ENCODE measurements at regions of chr6 and their contacts with region 1.

Region 1: GRCh38 chr6:52180787-52181558 is 5.2 kb upstream of the IL17A start:
- DNase-seq: no peak
- H3K4me3 Mint-ChIP-seq: no peak overlapping the region
- H3K27ac Mint-ChIP-seq: no peak overlapping the region
- H3K4me1 Mint-ChIP-seq: peaks cover 8% of the 10 kb centered on the region
- H3K27me3 Mint-ChIP-seq: peaks cover 21% of the 10 kb centered on the region

Region 2: DNA sequence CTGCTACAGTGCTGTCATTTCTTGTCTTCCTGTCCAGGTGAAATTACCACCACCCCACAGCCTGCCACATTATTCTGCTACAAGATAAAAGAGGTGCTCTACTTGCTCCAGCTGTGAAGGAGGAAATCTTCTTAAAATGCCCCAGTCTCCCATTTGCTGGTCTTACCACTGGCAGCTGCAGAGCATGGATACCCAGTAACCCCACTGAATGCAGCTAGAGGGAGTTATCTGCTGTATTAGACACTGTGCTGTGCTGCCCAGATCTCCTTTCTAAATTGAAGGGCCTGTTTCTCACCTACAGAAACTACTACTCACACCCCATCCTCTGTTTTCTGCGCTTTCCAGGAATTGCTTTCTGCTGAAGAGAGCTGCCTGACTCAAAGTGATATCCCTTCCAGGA is 611.4 kb before region 1 on chr6:
- CTCF ChIA-PET with region 1: no interaction called
- intact Hi-C with region 1: no loop called
- DNase-seq: no peak
- H3K4me3 Mint-ChIP-seq: no peak overlapping the region
- H3K27ac Mint-ChIP-seq: no peak overlapping the region
- H3K4me1 Mint-ChIP-seq: no peaks in the 10 kb centered on the region
- H3K27me3 Mint-ChIP-seq: no peaks in the 10 kb centered on the region

Region 3: DNA sequence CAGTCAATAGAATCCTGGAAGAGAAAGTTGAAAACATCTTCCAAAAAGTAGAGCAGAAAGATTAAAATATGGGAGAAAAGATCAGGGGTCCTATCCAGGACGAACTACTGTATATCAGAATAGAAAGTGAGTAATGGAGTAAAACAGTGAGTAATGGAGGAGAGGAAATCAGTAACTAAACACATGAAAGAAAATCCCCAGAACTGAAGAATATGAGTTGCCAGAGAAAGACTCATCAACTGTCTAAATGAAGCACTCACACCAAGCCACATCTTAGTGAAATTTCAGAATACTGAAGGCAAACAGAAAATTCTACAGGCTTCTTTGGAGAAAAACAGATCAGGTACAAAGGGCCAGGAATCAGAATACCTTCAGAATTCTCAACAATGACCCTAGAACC is 20.1 kb after region 1 on chr6:
- CTCF ChIA-PET with region 1: no interaction called
- intact Hi-C with region 1: loop called (anchors 2 kb)
- DNase-seq: no peak
- H3K4me3 Mint-ChIP-seq: no peak overlapping the region
- H3K27ac Mint-ChIP-seq: no peak overlapping the region
- H3K4me1 Mint-ChIP-seq: peaks cover 13% of the 10 kb centered on the region
- H3K27me3 Mint-ChIP-seq: peaks cover 15% of the 10 kb centered on the region

Region 4: DNA sequence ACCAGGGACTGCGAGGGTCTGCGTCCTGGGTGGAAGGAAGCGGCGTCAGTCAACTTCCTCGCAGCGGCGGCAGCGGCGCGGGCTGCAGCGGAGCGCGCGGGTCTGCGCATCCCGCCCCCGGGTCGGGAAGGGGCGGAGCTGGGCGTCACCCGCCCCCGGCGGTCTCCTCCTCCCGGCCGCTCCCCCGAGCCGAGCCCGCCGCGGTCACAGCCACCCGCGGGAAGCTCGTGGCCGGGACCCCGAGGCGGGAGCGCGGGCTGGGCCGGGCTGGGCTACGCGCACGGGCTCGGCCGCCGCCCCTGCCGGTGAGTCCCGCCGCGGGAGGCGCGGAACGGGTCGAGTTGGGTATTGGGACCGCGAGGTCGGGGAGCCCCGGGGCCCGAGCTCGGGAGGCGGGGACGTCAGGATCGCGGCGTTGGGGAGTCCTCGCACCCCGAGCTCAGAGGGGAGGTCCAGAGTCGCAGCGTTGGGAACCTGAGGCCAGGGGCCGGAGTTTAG is 181.0 kb after region 1 on chr6 and contains the start of gene PAQR8:
- CTCF ChIA-PET with region 1: no interaction called
- intact Hi-C with region 1: no loop called
- DNase-seq: peak; percentile 81
- H3K4me3 Mint-ChIP-seq: peak within 1 kb of the TSS; percentile 94
- H3K27ac Mint-ChIP-seq: peak within 1 kb of the TSS; percentile 91
- H3K4me1 Mint-ChIP-seq: peaks cover 38% of the 10 kb centered on the region
- H3K27me3 Mint-ChIP-seq: no peaks in the 10 kb centered on the region
- total RNA-seq, gene PAQR8: 6.8 to 9.2 TPM